Left colon (tissue), 2 donors: ENCODE measurements at regions of chr17 and their contacts with region 1.

Region 1: GRCh38 chr17:45021607-45022287 is 29.7 kb downstream of the DCAKD start:
- DNase-seq: peak; percentile 56 to 74
- ATAC-seq: peak; percentile 78

Region 2: DNA sequence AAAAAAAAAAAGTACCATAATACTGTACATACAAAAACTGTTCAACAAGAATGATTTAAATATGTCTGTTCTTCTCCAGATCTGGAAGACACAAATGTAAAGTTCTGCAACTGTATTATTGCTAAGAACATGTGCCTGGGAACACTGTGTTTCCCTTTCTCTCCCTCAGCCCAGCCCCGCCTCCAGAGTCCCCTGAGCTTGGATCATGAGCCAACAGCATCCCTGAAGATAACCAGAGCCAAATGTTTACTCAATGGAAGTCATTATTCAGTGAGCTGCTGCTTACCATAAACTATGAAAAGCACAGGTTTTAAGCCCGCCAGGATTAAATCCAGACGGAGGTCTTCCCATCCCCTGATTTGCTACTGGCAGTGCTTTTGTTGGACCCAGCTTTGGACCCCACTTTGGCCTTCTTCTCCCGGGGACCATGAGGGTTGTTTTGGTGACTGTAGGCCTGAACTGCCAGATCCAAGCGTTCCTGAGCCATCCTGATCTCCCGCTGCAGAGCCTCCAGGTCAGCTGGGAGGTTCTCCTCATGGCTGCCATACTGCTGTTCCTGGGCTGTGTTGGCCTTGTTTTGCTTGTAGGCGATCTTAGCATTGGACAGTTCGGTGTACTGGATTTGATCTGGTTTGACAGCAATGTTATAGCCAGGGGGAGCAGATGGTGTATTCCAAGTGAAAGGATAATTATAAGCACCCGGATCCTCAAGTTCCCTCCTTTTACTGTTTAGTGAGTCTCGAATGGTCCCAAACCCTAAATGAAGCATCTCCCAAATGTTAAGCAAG is 217.3 kb before region 1 on chr17:
- intact Hi-C with region 1: no loop called
- DNase-seq: peak in 1 of 2 donors; percentile 72
- ATAC-seq: no peak

Region 3: GRCh38 chr17:44919885-44920564 is 101.7 kb before region 1 on chr17:
- intact Hi-C with region 1: loop called (anchors 2 to 10 kb)
- DNase-seq: peak; percentile 69 to 78
- ATAC-seq: peak; percentile 97

Region 4: GRCh38 chr17:45190503-45191255 is 168.9 kb after region 1 on chr17:
- intact Hi-C with region 1: no loop called
- DNase-seq: no peak
- ATAC-seq: peak; percentile 45